ENCODE measurements at regions of chr9 and their contacts with region 1.

Region 1: DNA sequence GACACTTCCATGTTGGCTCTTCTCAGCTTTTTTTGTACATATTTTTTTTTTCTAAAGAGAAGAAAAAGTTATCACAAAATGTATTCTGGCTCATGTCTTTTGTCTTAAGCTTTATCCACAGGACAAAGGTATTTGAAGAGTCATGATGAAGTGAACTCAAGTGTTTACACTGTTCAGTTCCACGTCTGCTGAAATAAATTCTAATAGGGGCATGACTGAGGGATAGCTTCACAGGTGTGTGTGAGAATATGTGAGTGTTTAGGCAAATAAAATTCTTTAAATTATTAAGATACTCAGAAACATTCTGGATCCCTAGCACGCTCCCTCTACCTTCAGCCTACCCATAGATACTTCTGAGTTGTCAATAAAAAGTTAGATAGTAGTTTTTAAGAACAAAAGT is 59.8 kb downstream of the BAAT start:
- DNase-seq: no peak
- H3K4me3 Mint-ChIP-seq: no peak overlapping the region
- H3K27ac Mint-ChIP-seq: no peak overlapping the region
- H3K4me1 Mint-ChIP-seq: peaks cover 7% of the 10 kb centered on the region
- H3K27me3 Mint-ChIP-seq: peaks cover 10% of the 10 kb centered on the region
- CTCF ChIP-seq: no peak

Region 2: GRCh38 chr9:101139082-101139481 is 186.0 kb before region 1 on chr9:
- CTCF ChIA-PET with region 1: no interaction called
- POLR2A ChIA-PET with region 1: no interaction called
- intact Hi-C with region 1: no loop called
- DNase-seq: no peak
- H3K4me3 Mint-ChIP-seq: no peak overlapping the region
- H3K27ac Mint-ChIP-seq: no peak overlapping the region
- H3K4me1 Mint-ChIP-seq: no peaks in the 10 kb centered on the region
- H3K27me3 Mint-ChIP-seq: peaks cover 44% of the 10 kb centered on the region
- CTCF ChIP-seq: no peak

Region 3: GRCh38 chr9:101311758-101312420 is 13.2 kb before region 1 on chr9:
- CTCF ChIA-PET with region 1: interaction called, 18 read pairs
- POLR2A ChIA-PET with region 1: interaction called, 3 read pairs
- intact Hi-C with region 1: no loop called
- DNase-seq: peak; percentile 84
- H3K4me3 Mint-ChIP-seq: no peak overlapping the region
- H3K27ac Mint-ChIP-seq: no peak overlapping the region
- H3K4me1 Mint-ChIP-seq: peaks cover 7% of the 10 kb centered on the region
- H3K27me3 Mint-ChIP-seq: peaks cover 11% of the 10 kb centered on the region
- CTCF ChIP-seq: peak; percentile 54

Region 4: GRCh38 chr9:101342595-101342994 is 17.5 kb after region 1 on chr9:
- CTCF ChIA-PET with region 1: no interaction called
- POLR2A ChIA-PET with region 1: no interaction called
- intact Hi-C with region 1: no loop called
- DNase-seq: no peak
- H3K4me3 Mint-ChIP-seq: no peak overlapping the region
- H3K27ac Mint-ChIP-seq: no peak overlapping the region
- H3K4me1 Mint-ChIP-seq: no peaks in the 10 kb centered on the region
- H3K27me3 Mint-ChIP-seq: peaks cover 33% of the 10 kb centered on the region
- CTCF ChIP-seq: no peak

Measured in MCF 10A (cell line).